HepG2 (cell line): ENCODE measurements at regions of chr20 and their contacts with region 1.

Region 1: DNA sequence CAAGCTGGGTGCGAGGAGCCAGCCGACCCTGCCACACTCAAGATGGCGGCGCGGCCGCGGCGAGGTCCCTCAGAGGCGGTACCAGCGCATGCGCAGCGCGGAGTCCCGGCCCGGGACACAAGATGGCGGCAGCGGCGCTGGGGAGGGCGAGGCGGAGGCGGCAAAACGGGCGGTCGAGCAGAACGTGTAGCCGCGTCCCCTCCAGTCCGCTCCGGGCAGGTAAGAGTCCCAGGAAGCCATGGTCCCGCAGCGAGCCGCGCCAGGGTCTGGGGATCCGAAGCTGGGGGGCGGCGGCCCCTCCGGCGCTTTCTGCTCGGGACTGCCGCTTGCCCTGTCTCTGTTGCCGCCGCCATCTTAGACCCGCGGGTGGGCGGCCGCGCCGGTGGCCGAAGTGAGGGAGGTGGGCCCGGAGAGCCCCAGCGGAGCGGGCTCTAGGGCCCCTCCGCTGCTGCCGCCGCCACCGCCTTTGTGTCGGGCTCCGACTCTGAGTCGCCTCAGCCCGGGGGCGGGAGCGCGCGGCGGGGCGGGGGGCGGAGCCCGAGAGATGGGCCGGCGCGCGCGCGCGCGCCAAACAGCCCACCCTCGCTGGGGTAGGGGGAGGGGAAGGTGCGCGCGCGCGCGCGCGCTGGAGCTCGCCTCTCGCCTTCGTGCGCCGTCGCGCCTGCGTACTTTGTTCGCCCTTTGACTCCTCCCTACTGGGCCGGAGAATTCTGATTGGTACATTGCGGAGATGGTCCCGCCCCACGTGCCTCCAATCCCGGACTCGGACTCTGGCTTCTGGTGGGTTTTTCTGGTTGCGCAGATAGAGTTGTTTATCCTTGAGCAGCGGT is at the start of gene PCIF1:
- DNase-seq: peak; percentile 98
- ATAC-seq: peak; percentile 72
- H3K4me3 ChIP-seq: peak within 1 kb of the TSS; percentile 92 to 97 (median 95)
- H3K27ac ChIP-seq: peak within 1 kb of the TSS; percentile 97
- H3K4me1 ChIP-seq: peaks cover 54% of the 10 kb centered on the region
- H3K27me3 ChIP-seq: no peaks in the 10 kb centered on the region; a peak in 1 of 5 replicates
- CTCF ChIP-seq: no peak
- EP300 ChIP-seq: peak in 1 of 2 experiments; percentile 23; a peak in 3 of 4 replicates
- POLR2A ChIP-seq: peak; percentile 64 to 98
- RAD21 ChIP-seq: peak; percentile 90
- total RNA-seq, gene PCIF1: 18.5 and 20.9 TPM in 2 replicates

Region 2: DNA sequence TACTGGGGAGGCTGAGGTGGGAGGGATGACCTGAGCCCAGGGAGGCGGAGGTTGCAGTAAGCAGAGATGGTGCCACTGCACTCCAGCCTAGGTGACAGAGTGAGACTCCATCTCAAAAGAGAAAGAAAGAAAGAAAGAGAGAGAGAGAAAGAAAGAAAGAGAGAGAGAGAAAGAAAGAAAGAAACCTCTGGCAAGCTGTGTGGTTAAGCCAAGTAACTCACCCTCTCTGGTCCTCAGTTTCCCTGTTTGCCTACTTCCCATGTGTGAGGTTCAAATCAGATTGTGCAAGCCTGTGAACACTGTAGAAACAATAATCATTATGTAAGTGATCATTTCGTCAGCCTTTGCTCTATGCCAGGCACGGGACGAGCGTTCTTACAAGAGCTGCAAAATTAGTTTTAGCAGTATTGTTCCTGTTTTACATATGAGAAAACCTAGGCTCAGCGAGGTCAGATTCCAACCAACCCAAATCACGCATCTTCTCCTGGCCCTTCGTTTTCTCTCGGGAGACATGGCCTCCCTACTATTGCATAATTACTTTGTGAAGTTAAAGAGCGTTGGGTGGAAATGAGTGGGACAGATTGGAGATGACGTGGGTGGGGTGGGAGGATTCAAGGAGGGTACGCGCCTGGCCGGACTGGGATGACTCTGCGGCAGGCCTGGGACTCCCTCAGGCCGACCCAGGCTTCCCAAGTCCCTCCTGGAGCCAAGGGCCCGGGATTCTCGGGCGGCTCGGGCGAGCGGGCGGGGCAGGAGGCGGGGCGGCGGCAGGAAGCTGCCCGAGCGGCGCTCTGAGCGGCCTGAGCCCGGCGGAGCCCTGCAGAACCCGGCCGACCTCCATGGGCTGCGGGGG is 101.5 kb before region 1 on chr20 and contains the start of gene SNX21:
- CTCF ChIA-PET with region 1: no interaction called
- POLR2A ChIA-PET with region 1: interaction called, 13 read pairs
- in situ Hi-C with region 1: no loop called
- intact Hi-C with region 1: loop called (anchors 5 kb)
- DNase-seq: peak; percentile 84
- ATAC-seq: peak; percentile 92
- H3K4me3 ChIP-seq: peak within 1 kb of the TSS; percentile 71 to 87 (median 86)
- H3K27ac ChIP-seq: peak within 1 kb of the TSS; percentile 69
- H3K4me1 ChIP-seq: peaks cover 67% of the 10 kb centered on the region
- H3K27me3 ChIP-seq: no peaks in the 10 kb centered on the region
- CTCF ChIP-seq: no peak; the same call in 1 of the 2 replicates
- EP300 ChIP-seq: no peak; a peak in 1 of 4 replicates
- POLR2A ChIP-seq: peak; percentile 83 to 89; a peak in 3 of 4 replicates
- RAD21 ChIP-seq: no peak
- total RNA-seq, gene SNX21: 9.3 and 12.8 TPM in 2 replicates

Region 3: DNA sequence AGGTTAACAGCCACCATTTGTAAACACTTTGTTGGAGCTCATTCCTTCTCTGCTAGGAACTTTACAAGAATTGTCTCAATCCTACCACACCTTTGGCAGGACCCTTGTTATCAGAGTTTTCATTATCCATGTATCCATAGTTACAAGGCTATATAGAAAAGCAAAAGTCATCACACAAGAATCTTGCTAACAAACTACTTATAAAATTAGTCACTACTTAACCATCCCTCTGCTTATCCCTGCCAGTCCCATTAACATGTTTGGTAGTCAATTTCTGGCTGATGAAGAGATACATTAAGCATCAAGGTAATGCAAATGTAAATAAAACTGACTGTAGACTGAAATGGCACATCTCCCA is 67.0 kb before region 1 on chr20:
- CTCF ChIA-PET with region 1: no interaction called
- POLR2A ChIA-PET with region 1: interaction called, 14 read pairs
- in situ Hi-C with region 1: no loop called
- intact Hi-C with region 1: no loop called
- DNase-seq: no peak
- ATAC-seq: no peak
- H3K4me3 ChIP-seq: no peak overlapping the region
- H3K27ac ChIP-seq: peak overlapping the region; percentile 24
- H3K4me1 ChIP-seq: peaks cover 67% of the 10 kb centered on the region
- H3K27me3 ChIP-seq: no peaks in the 10 kb centered on the region
- CTCF ChIP-seq: no peak
- EP300 ChIP-seq: no peak
- POLR2A ChIP-seq: no peak
- RAD21 ChIP-seq: no peak

Region 4: DNA sequence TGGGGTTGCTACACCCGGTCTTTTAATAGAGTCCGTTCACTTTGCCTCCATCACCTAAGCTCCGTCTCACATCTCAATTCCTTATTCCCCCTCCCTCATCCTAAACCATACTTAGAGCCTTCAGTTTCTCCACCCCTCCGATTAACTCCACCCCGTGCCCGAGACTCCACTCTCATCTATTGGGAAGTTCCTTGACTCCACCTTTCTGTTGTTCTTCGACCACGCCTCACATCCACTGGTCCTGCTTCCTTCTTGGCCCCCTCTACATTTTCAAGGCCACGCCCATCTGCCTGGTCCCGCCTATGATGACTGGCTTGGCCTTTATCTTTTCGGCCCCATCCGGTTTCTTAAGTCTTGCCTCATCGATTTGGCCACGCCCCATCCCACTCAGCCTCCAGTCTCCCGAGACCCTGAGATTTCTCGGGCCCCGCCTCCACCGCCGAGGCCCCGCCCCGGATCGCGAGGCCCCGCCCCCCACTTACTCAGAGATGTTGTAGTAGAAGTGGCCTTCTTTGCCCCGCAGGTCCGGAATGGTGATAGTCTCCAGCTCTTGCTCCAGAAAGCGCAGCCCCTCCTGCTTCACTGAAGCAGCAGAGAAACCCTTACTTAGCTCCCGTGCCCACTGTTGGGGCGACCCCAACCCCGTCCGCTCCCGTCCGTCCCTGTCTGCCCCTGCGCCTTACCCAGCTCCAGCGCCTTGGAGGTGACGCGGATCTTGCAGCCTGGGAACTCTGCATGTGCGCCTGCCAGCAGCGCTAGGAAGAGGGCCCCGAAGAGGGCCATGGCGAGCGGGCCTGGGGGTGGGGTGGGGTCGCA is 23.9 kb before region 1 on chr20:
- CTCF ChIA-PET with region 1: no interaction called
- POLR2A ChIA-PET with region 1: interaction called, 58 read pairs
- in situ Hi-C with region 1: no loop called
- intact Hi-C with region 1: no loop called
- DNase-seq: no peak
- ATAC-seq: no peak
- H3K4me3 ChIP-seq: peak overlapping the region in 1 of 3 experiments; percentile 66; a peak in 1 of 6 replicates
- H3K27ac ChIP-seq: no peak overlapping the region
- H3K4me1 ChIP-seq: peaks cover 56% of the 10 kb centered on the region
- H3K27me3 ChIP-seq: peaks cover 0 to under 1% of the 10 kb centered on the region in 2 experiments; a peak in 2 of 5 replicates
- CTCF ChIP-seq: no peak
- EP300 ChIP-seq: no peak
- POLR2A ChIP-seq: no peak
- RAD21 ChIP-seq: no peak

Region 5: DNA sequence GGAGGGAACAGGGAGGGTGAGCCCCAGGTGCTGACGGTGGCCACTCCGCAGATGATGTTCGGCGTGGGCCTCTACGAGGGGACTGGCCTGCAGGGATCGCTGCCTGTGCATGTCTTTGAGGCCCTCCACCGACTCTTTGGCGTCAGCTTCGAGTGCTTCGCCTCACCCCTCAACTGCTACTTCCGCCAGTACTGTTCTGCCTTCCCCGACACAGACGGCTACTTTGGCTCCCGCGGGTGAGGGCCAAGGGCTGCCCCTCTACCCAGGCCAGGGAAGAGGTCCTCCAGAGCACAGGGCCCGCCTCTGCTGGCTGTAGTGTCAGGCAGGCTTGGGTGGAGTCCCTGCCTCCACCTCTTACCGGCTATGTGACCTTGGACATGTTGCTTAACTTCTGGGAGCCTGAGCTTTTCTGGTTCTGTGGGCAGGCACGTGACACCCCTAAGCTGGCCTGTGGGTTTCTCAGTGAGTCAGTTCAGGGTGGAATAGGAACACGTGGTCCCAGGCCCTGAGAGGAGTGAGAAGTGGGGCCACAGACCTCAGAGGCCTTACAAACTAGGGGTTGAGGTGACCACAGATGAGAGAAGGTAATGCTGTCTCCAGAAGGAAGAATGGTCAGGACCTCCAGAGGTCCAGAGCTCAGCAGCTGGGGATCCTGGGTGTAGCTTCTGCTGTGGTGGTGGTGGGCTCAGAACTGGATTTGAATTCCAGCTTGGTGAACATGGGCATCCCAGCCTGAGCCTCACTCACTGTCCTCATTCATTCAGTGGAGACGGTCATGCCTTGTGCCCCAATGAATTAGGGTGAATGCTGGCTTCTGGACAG is 11.6 kb after region 1 on chr20:
- CTCF ChIA-PET with region 1: interaction called, 3 read pairs
- POLR2A ChIA-PET with region 1: interaction called, 201 read pairs
- in situ Hi-C with region 1: no loop called
- intact Hi-C with region 1: no loop called
- DNase-seq: peak; percentile 97
- ATAC-seq: peak; percentile 83
- H3K4me3 ChIP-seq: no peak overlapping the region
- H3K27ac ChIP-seq: peak overlapping the region; percentile 65
- H3K4me1 ChIP-seq: peaks cover 30% of the 10 kb centered on the region
- H3K27me3 ChIP-seq: no peaks in the 10 kb centered on the region
- CTCF ChIP-seq: peak; percentile 46
- EP300 ChIP-seq: peak; percentile 64 to 80; a peak in 3 of 4 replicates
- POLR2A ChIP-seq: peak; percentile 2 to 37; a peak in 2 of 4 replicates
- RAD21 ChIP-seq: peak; percentile 12; the same call in 1 of the 2 replicates

Region 6: DNA sequence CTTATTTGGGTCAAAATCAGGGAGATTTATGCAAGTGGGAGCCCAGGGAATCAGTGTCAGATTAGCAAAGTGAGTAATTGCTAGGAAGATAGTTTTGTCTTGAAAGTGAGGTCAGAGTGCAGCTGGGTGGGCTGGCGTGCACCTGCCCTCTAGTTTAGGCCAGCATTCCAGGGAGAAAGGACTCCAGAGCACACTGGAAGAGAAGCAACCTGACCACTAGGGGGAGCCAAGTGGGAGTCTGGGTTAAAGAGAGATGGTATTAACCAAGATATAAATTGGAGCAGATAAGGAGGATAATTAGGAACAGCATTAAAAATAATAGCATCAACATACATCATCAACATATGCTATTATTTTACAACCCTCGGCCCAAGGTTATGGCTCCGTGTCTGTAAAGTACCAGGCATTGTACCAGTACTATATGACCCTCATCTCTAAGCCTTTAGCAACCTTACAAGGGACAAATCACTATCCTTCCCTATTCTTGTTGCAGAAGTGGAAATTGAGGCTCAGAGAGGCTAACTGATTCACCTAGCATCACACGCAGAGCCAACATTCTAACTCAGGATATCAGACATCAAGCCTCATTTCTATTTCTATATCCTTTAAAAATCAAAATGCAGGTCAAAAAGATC is 832.4 kb after region 1 on chr20:
- CTCF ChIA-PET with region 1: no interaction called
- POLR2A ChIA-PET with region 1: no interaction called
- in situ Hi-C with region 1: no loop called
- intact Hi-C with region 1: no loop called
- DNase-seq: peak; percentile 63
- ATAC-seq: peak; percentile 85
- H3K4me3 ChIP-seq: no peak overlapping the region
- H3K27ac ChIP-seq: no peak overlapping the region
- H3K4me1 ChIP-seq: no peaks in the 10 kb centered on the region
- H3K27me3 ChIP-seq: peaks cover 6 to 38% of the 10 kb centered on the region in 2 experiments
- CTCF ChIP-seq: peak; percentile 77
- EP300 ChIP-seq: no peak
- POLR2A ChIP-seq: no peak
- RAD21 ChIP-seq: peak; percentile 41; the same call in 1 of the 2 replicates